WTC11 (cell line): ENCODE measurements at regions of chr2 and their contacts with region 1.

Region 1: GRCh38 chr2:204051476-204051875 is 114.9 kb downstream of the ICOS start:
- DNase-seq: peak; percentile 18
- ATAC-seq: peak; percentile 94
- H3K4me3 Mint-ChIP-seq: no peak overlapping the region
- H3K27ac Mint-ChIP-seq: no peak overlapping the region
- H3K4me1 Mint-ChIP-seq: peaks cover under 1% of the 10 kb centered on the region; the same call in 1 of the 2 replicates
- H3K27me3 Mint-ChIP-seq: no peaks in the 10 kb centered on the region
- CTCF ChIP-seq: no peak

Region 2: DNA sequence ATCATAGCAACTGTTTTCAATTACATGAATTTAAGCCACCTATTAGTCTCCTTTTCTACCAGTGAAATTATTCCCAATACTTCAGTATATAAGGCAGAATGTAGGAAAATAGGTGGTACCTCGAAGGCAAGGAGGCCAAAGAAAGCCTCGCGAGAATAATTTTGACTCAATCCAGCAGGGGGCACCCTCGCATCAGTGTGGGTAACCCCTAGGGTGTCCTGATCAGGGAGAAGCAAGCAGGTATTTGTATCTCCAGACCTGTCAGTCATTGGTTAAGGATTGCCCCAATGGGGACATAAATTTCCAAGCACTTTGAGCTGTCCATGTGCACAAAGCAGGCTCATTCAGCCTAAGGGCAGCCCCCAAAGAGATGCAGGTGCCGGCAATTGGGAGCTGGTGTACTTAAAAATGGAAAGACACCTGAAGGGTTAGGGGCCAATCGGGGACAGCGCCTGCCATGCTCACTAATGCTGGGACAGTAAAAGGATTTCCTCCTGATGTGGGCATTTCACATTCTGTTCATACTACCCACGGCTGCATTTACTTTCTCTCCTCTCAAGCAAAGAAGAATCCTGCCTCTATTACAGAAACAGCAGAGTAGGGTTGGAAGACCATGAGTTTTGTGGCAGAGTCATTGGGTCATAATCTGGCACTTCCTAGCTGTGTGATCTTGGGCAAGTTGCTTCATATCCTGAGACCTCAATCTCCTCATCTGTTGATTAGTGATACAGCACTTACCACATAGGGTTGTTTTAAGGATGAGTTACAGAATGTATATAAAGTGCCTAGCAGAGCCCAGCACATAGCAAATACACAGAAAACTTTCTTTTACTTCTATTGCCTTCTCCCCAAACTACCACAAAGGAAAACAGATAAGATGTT is 21.2 kb after region 1 on chr2:
- CTCF ChIA-PET with region 1: interaction called, 11 read pairs
- POLR2A ChIA-PET with region 1: no interaction called
- DNase-seq: peak; percentile 80
- ATAC-seq: peak; percentile 89
- H3K4me3 Mint-ChIP-seq: no peak overlapping the region
- H3K27ac Mint-ChIP-seq: no peak overlapping the region
- H3K4me1 Mint-ChIP-seq: peaks cover 3% of the 10 kb centered on the region; the same call in 1 of the 2 replicates
- H3K27me3 Mint-ChIP-seq: no peaks in the 10 kb centered on the region
- CTCF ChIP-seq: peak; percentile 66